ENCODE measurements at regions of chr19 and their contacts with region 1.

Region 1: DNA sequence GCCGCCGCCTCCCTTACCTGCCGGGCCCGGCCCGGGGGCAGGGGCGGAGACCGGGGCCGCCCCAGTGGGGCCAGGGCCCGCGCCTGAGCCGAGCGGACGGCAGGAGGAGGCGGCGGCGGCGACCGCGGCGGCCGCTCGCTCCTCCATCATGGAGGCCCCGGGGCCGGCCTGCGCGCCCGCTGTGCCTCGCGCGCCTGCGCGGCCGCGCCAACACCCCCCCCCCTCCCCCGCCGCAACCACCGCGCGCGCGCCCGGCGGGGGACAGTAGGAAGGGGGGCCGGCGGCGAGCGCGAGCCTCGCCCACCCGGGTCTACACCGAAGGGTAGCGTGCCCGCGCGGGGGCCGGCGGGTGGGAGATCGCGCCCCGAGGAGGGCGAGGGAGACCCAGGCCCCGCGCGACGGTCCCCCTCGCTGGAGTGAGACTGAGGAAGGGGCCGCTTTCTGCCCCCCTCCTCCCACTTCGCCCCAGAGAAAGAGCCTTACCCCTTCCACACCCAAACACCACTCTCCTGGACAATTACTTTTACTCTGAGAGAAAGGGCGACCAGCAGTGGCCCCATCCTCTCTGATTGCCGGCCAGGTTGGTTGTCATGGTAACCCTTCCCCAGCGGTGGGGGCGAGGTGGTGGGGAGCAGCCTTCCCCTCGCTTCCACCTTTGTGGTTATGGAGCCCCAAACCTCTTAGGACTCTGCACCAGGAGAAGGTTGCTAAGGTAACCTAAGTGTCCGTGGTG is at the start of gene STRN4:
- DNase-seq: peak; percentile 51
- ATAC-seq: peak; percentile 66
- H3K4me3 Mint-ChIP-seq: peak within 1 kb of the TSS; percentile 94
- H3K27ac Mint-ChIP-seq: peak within 1 kb of the TSS; percentile 83
- H3K4me1 Mint-ChIP-seq: peaks cover 64% of the 10 kb centered on the region
- H3K27me3 Mint-ChIP-seq: no peaks in the 10 kb centered on the region
- CTCF ChIP-seq: no peak
- total RNA-seq, gene STRN4: 83.9 and 90.4 TPM in 2 replicates

Region 2: GRCh38 chr19:46704379-46705076 is 41.9 kb before region 1 on chr19:
- CTCF ChIA-PET with region 1: interaction called, 5 read pairs
- POLR2A ChIA-PET with region 1: no interaction called
- intact Hi-C with region 1: loop called (anchors 1 kb)
- DNase-seq: peak; percentile 86
- ATAC-seq: peak; percentile 95
- H3K4me3 Mint-ChIP-seq: no peak overlapping the region
- H3K27ac Mint-ChIP-seq: peak overlapping the region; percentile 18
- H3K4me1 Mint-ChIP-seq: peaks cover 6% of the 10 kb centered on the region
- H3K27me3 Mint-ChIP-seq: no peaks in the 10 kb centered on the region
- CTCF ChIP-seq: peak; percentile 71

Measured in activated B cell treated with CpG ODN at 0.5 μM for 24 hours (primary cell).